Right cardiac atrium (tissue), 5 donors: ENCODE measurements at regions of chr17 and their contacts with region 1.

Region 1: GRCh38 chr17:42677008-42677857 is 439 bp upstream of the PLEKHH3 start:
- DNase-seq: peak; percentile 100
- ATAC-seq: peak; percentile 80 to 82
- H3K4me3 ChIP-seq: peak overlapping the region; percentile 80
- H3K27ac ChIP-seq: peak overlapping the region; percentile 99
- H3K4me1 ChIP-seq: peaks cover 5% of the 10 kb centered on the region
- H3K27me3 ChIP-seq: no peaks in the 10 kb centered on the region

Region 2: GRCh38 chr17:42577532-42578281 is 99.5 kb before region 1 on chr17 and contains the start of gene PSMC3IP:
- intact Hi-C with region 1: loop called in 2 of 4 experiments (anchors 2 to 5 kb)
- DNase-seq: peak; percentile 97 to 98 (median 97)
- ATAC-seq: peak; percentile 95
- H3K4me3 ChIP-seq: peak within 1 kb of the TSS; percentile 60
- H3K27ac ChIP-seq: peak within 1 kb of the TSS; percentile 85
- H3K4me1 ChIP-seq: no peaks in the 10 kb centered on the region
- H3K27me3 ChIP-seq: no peaks in the 10 kb centered on the region
- total RNA-seq, gene PSMC3IP: 1.4 to 3.3 (median 2.5) TPM

Region 3: DNA sequence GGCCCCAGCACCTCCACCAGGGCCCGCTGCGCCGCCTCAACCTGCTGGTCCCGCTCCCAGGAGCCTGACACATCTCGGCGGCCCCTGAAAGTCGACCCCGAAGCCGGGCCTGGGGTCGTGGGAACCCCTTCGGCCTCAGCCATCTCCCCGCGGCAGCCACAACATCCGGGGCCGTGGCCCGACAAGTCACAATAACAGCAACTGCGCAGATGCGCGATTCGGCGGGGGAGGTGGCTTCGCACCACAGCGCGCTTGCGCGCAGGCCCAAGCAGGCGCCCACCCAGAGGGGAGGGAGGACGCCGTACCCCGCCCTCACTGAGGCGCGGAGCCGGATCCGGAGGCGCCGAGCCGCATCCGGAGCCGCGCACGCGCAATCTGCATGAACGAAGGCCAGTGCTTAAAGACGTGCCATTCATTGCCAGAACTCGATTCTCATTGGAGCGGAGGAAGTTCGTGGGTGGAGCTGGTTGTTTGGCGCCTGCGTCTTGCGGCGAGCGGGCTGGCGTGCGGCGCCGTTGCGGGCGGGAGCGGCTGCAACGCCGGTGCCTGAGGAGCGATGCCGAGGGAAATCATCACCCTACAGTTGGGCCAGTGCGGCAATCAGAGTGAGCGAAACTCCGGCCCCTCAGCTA is 67.9 kb before region 1 on chr17 and contains the starts of genes RETREG3 and TUBG1:
- intact Hi-C with region 1: loop called (anchors 5 to 10 kb)
- DNase-seq: peak; percentile 99 to 100 (median 100)
- ATAC-seq: peak; percentile 97 to 98
- H3K4me3 ChIP-seq: peak within 1 kb of the TSS; percentile 66
- H3K27ac ChIP-seq: peak within 1 kb of the TSS; percentile 74
- H3K4me1 ChIP-seq: peaks cover 5% of the 10 kb centered on the region
- H3K27me3 ChIP-seq: no peaks in the 10 kb centered on the region
- total RNA-seq, gene RETREG3: 23.9 to 27.0 (median 25.5) TPM
- total RNA-seq, gene TUBG1: 34.3 to 60.7 (median 46.0) TPM